Activated CD8-positive, alpha-beta T cell treated with anti-CD3 and anti-CD28 coated beads, Interleukin-2, amount 10 ng/mL, durations not matched to agents 7 days and 5 days (primary cell): ENCODE measurements at regions of chr11 and their contacts with region 1.

Region 1: GRCh38 chr11:75525596-75526541 is at the start of gene GDPD5:
- DNase-seq: peak; percentile 88
- ATAC-seq: peak; percentile 90
- H3K4me3 Mint-ChIP-seq: peak within 1 kb of the TSS; percentile 82
- H3K27ac Mint-ChIP-seq: peak within 1 kb of the TSS; percentile 69
- H3K4me1 Mint-ChIP-seq: peaks cover 30% of the 10 kb centered on the region
- H3K27me3 Mint-ChIP-seq: peaks cover 28% of the 10 kb centered on the region
- total RNA-seq, gene GDPD5: 23.1 to 26.6 TPM

Region 2: DNA sequence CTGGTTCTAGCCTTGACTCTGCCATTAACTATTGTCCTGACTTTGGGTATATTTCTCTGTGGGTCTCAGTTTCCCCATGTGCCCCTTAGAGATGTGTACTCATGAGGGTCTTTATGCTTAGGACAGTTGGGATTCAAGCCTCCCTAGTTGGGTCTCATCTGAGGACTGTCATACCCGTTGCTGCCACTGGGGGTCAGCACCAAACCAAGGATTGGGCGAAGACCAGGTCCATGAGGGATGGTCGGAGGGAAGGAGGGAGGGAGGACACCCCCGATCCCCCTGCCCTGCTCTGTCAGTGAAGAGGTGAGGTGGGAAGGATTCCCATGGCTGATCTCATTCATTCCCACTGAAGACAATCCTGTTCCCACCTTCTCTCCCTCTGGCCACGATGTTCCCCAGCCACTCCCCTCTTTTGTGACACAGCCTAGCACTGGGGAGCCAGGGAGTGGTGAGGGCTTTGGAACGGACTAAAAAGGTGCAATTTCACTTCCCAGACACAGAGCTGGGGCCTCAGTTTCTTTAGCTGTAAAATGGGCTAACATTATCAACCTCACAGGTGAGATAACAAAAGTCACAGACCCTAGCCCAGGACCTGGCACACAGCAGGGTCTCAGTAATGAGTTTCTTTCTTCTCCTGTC is 80.4 kb before region 1 on chr11:
- CTCF ChIA-PET with region 1: interaction called, 237 read pairs
- POLR2A ChIA-PET with region 1: interaction called, 3 read pairs
- DNase-seq: peak; percentile 78
- ATAC-seq: peak; percentile 80
- H3K4me3 Mint-ChIP-seq: no peak overlapping the region
- H3K27ac Mint-ChIP-seq: no peak overlapping the region
- H3K4me1 Mint-ChIP-seq: no peaks in the 10 kb centered on the region
- H3K27me3 Mint-ChIP-seq: no peaks in the 10 kb centered on the region

Region 3: GRCh38 chr11:75450826-75451821 is 74.7 kb before region 1 on chr11:
- CTCF ChIA-PET with region 1: interaction called, 237 read pairs
- POLR2A ChIA-PET with region 1: interaction called, 3 read pairs
- DNase-seq: peak; percentile 59
- ATAC-seq: peak; percentile 51
- H3K4me3 Mint-ChIP-seq: no peak overlapping the region
- H3K27ac Mint-ChIP-seq: no peak overlapping the region
- H3K4me1 Mint-ChIP-seq: no peaks in the 10 kb centered on the region
- H3K27me3 Mint-ChIP-seq: no peaks in the 10 kb centered on the region

Region 4: GRCh38 chr11:75474878-75475766 is 50.7 kb before region 1 on chr11:
- CTCF ChIA-PET with region 1: interaction called, 13 read pairs
- POLR2A ChIA-PET with region 1: interaction called, 4 read pairs
- DNase-seq: peak; percentile 94
- ATAC-seq: peak; percentile 90
- H3K4me3 Mint-ChIP-seq: peak overlapping the region; percentile 70
- H3K27ac Mint-ChIP-seq: peak overlapping the region; percentile 98
- H3K4me1 Mint-ChIP-seq: peaks cover 35% of the 10 kb centered on the region
- H3K27me3 Mint-ChIP-seq: no peaks in the 10 kb centered on the region